Sigmoid colon (tissue), 7 donors: ENCODE measurements at regions of chr3 and their contacts with region 1.

Region 1: GRCh38 chr3:101779047-101779821 is at the start of gene NXPE3:
- DNase-seq: peak; percentile 96
- H3K4me3 ChIP-seq: peak within 1 kb of the TSS; percentile 69 to 90 (median 87)
- H3K27ac ChIP-seq: peak within 1 kb of the TSS; percentile 85 to 93 (median 92)
- H3K4me1 ChIP-seq: peaks cover 0 to 34% (median 24%) of the 10 kb centered on the region in 4 donors
- H3K27me3 ChIP-seq: no peaks in the 10 kb centered on the region
- CTCF ChIP-seq: no peak
- EP300 ChIP-seq: no peak
- POLR2A ChIP-seq: no peak
- total RNA-seq, gene NXPE3: 11.5 to 15.8 (median 13.2) TPM

Region 2: DNA sequence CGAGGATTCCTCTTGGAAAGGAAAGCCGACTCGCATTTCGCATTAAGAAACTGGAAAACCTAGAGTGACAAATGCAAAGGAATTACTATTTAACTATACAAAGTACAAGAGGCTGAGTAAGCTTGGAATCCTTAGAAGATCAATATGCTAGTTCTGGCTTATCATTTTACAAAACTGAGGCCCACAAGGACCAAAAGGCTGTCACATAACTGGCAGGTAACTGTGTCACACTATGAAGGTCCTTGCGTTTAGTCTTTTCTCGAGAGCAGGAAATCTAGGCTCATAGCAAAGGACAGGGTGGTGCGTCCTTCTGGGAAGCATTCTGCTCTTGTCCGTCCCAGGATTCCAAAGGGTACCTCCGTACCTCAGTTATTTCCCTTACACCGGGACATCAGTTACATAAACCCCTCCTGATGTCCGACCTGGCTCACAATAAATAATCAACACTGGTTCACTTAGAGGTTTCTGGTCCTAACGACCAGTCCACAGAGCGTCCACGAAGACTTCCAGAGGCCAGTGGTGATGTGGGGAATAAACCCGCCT is 93.3 kb before region 1 on chr3:
- intact Hi-C with region 1: loop called (anchors 5 kb)
- DNase-seq: no peak
- H3K4me3 ChIP-seq: peak overlapping the region; percentile 58 to 77 (median 64)
- H3K27ac ChIP-seq: peak overlapping the region; percentile 92 to 96 (median 94)
- H3K4me1 ChIP-seq: peaks cover 0 to 39% (median 33%) of the 10 kb centered on the region in 4 donors
- H3K27me3 ChIP-seq: no peaks in the 10 kb centered on the region
- CTCF ChIP-seq: no peak
- EP300 ChIP-seq: no peak
- POLR2A ChIP-seq: no peak

Region 3: DNA sequence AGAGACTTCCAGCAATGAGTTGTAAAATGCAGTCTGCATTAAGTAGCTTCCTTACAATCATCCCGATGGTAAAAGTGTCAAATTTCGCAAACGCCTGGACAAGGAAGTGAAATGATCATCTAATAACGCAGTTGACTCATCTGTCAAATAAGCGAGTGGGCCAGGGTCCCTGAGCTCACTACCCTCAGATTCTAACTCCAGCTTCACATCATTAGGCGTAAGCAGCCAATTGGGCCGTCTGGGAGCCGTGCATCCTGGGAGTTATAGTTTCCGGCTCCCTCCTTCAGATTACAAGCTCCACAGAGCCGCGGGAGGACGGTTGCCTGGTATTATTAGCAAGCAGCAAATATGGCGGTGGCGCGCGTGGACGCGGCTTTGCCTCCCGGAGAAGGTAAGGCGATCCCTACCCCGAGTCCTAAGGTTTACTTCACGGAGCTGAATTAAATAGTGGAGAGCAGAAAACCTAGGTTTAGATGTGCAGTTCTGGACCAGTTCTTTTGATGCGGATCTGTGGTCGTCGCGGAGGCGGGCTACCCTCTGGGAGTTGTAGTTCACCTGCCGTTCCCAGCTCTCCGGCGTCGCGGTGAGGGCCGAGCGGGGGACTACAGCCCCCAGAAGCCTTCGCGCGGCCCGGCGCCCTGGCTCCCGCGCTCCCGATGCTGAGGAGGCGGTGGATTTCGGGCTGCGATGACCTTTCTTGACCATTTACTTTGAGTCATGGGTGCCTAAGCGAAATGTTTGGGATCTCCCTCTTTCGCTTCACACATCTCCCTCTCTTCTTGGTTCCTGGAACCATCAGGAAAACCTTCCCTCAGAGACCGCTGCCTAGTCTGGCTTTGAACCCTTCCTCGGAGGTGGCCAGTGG is 54.7 kb before region 1 on chr3 and contains the start of gene CEP97:
- intact Hi-C with region 1: loop called (anchors 5 kb)
- DNase-seq: peak; percentile 94
- H3K4me3 ChIP-seq: peak within 1 kb of the TSS; percentile 63 to 82 (median 66)
- H3K27ac ChIP-seq: peak within 1 kb of the TSS; percentile 76 to 86 (median 80)
- H3K4me1 ChIP-seq: peaks cover 0 to 11% (median 8%) of the 10 kb centered on the region in 4 donors
- H3K27me3 ChIP-seq: no peaks in the 10 kb centered on the region
- CTCF ChIP-seq: no peak
- EP300 ChIP-seq: peak in 1 of 4 donors; percentile 5
- POLR2A ChIP-seq: no peak
- total RNA-seq, gene CEP97: 9.0 to 11.1 (median 10.3) TPM